Activated CD4-positive, alpha-beta memory T cell treated with anti-CD3 and anti-CD28 coated beads, Interleukin-2, amount 10 ng/mL, durations not matched to agents 7 days and 5 days (primary cell): ENCODE measurements at regions of chr22 and their contacts with region 1.

Region 1: GRCh38 chr22:20116951-20117645 is at the start of gene TRMT2A:
- DNase-seq: peak; percentile 98
- H3K4me3 Mint-ChIP-seq: peak within 1 kb of the TSS; percentile 86
- H3K27ac Mint-ChIP-seq: peak within 1 kb of the TSS; percentile 90
- H3K4me1 Mint-ChIP-seq: peaks cover 51% of the 10 kb centered on the region
- H3K27me3 Mint-ChIP-seq: no peaks in the 10 kb centered on the region
- total RNA-seq, gene TRMT2A: 71.8 to 75.2 TPM

Region 2: GRCh38 chr22:20020533-20021195 is 96.4 kb before region 1 on chr22 and contains the start of gene TANGO2:
- CTCF ChIA-PET with region 1: no interaction called
- POLR2A ChIA-PET with region 1: interaction called, 23 read pairs
- DNase-seq: peak; percentile 94
- H3K4me3 Mint-ChIP-seq: peak within 1 kb of the TSS; percentile 91
- H3K27ac Mint-ChIP-seq: peak within 1 kb of the TSS; percentile 86
- H3K4me1 Mint-ChIP-seq: peaks cover 32% of the 10 kb centered on the region
- H3K27me3 Mint-ChIP-seq: peaks cover 17% of the 10 kb centered on the region
- total RNA-seq, gene TANGO2: 39.1 to 44.5 TPM

Region 3: DNA sequence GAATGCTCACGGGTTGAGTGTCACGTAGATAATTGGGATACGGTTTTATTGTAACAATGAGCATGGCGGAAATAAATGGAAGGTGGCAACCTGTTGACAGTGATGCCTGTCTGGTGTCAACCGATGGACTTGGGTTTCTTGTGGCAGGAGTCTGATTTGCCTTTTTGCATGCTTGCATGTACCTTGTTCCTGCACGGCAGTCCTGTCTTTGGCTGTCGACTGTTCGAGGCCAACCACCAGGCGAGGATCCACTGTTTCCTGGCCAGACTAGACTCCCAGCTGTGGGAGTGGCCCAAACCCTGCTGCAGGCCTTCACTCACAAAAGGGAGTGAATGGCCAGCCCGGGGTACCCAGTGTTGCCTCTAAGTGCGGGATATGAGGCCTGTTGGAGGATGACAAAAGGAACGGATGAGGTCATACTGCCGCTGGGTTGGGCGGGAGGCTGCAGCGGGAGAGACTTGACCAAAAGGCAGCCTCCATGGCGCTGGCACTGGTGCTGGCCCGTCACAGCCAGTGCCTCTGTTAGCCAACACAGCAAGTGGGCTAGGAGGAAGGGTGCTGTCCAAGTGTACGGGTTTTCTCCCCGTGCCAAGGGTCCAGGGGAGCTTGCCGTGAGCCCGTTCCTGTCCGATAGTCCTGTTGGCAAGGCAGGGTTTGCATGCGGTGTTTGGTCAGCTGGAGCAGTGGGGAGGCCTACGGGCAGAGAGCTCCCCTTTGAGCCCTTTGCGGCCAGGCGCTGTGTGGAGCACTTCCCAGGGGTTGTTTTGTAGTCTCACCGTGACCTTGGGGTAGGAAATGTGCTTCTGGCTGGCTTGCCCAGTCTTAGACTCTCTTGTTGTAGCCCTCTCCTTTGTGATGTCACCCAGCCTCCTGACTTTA is 36.1 kb before region 1 on chr22:
- CTCF ChIA-PET with region 1: no interaction called
- POLR2A ChIA-PET with region 1: interaction called, 19 read pairs
- DNase-seq: peak; percentile 27
- H3K4me3 Mint-ChIP-seq: peak overlapping the region; percentile 83
- H3K27ac Mint-ChIP-seq: peak overlapping the region; percentile 44
- H3K4me1 Mint-ChIP-seq: peaks cover 49% of the 10 kb centered on the region
- H3K27me3 Mint-ChIP-seq: no peaks in the 10 kb centered on the region

Region 4: GRCh38 chr22:20102203-20102780 is 14.8 kb before region 1 on chr22:
- CTCF ChIA-PET with region 1: interaction called, 8 read pairs
- POLR2A ChIA-PET with region 1: interaction called, 35 read pairs
- DNase-seq: no peak
- H3K4me3 Mint-ChIP-seq: no peak overlapping the region
- H3K27ac Mint-ChIP-seq: peak overlapping the region; percentile 57
- H3K4me1 Mint-ChIP-seq: peaks cover 42% of the 10 kb centered on the region
- H3K27me3 Mint-ChIP-seq: no peaks in the 10 kb centered on the region

Region 5: DNA sequence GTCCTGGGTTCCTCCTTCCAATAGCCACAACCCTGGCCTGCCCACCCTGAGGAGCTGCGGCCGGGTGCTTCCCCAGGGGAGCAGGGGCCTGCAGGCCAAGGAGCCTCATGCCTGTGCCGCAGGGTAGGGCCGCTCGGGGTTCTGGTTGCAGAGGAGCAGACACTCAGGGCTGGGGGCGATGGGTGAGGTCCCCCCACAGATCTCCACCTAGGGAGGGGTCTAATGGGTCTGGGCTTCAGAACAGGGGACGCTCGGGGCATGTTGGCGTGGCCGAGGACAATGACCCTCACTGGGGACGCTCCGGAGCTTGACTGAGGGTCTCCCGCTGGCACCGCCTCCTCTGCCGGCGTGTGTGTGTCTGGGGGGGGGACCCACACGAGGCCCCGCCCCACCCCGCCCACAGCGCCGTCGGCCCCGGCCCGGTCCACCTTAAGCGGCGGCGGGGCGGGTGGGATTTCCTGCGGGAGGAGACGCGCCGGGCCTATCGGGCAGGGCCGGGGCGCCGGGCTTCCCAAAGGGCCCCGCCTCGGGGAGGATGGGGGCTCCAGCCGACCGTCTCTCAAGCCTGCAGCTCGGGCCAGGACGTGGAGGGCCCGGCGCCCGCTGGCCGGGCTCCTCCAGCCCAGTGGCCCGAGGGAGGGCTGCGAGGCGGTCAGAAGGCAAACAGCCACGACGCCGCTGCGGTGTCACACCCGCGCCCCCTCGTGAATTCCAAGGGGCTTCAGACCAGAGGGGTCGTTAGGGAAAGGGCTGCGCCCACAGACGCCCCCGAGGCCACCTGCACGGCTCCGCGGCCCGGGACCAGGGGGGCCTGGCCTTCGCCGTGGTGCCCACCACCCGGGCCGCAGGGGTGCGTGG is 13.9 kb after region 1 on chr22:
- CTCF ChIA-PET with region 1: interaction called, 11 read pairs
- POLR2A ChIA-PET with region 1: interaction called, 56 read pairs
- DNase-seq: peak; percentile 74
- H3K4me3 Mint-ChIP-seq: peak overlapping the region; percentile 62
- H3K27ac Mint-ChIP-seq: no peak overlapping the region
- H3K4me1 Mint-ChIP-seq: peaks cover 20% of the 10 kb centered on the region
- H3K27me3 Mint-ChIP-seq: no peaks in the 10 kb centered on the region